ENCODE measurements at regions of chr3 and their contacts with region 1.

Region 1: GRCh38 chr3:189967254-189967865 is 153.3 kb downstream of the P3H2 start:
- DNase-seq: no peak
- H3K4me3 ChIP-seq: no peak overlapping the region
- CTCF ChIP-seq: peak; percentile 57

Region 2: DNA sequence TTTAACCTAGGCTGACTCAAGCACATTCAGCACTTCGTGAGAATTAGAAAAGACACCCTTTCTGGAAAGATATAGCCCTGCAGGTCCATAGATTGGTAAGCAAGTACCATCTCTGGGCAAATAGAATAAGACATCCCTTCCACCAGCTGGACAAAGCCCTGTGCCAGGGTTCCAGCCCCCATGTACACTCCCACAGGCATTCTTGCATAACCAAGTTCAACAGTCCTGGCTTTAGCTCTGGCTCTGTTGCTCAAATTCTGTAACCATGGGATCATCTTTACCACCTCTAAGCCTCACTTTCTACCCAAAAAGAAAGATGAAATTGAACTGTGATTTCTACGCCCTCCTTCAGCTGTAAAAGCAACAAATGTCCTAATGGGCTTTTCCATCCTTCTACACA is 12.6 kb before region 1 on chr3:
- CTCF ChIA-PET with region 1: interaction called, 62 read pairs
- POLR2A ChIA-PET with region 1: no interaction called
- DNase-seq: no peak
- H3K4me3 ChIP-seq: no peak overlapping the region
- CTCF ChIP-seq: no peak

Region 3: GRCh38 chr3:189999718-190000117 is 32.4 kb after region 1 on chr3:
- CTCF ChIA-PET with region 1: interaction called, 15 read pairs
- POLR2A ChIA-PET with region 1: no interaction called
- DNase-seq: no peak
- H3K4me3 ChIP-seq: no peak overlapping the region
- CTCF ChIP-seq: no peak

Region 4: GRCh38 chr3:190017521-190018288 is 50.3 kb after region 1 on chr3:
- CTCF ChIA-PET with region 1: interaction called, 17 read pairs
- POLR2A ChIA-PET with region 1: no interaction called
- DNase-seq: no peak
- H3K4me3 ChIP-seq: no peak overlapping the region
- CTCF ChIP-seq: peak; percentile 26

Region 5: DNA sequence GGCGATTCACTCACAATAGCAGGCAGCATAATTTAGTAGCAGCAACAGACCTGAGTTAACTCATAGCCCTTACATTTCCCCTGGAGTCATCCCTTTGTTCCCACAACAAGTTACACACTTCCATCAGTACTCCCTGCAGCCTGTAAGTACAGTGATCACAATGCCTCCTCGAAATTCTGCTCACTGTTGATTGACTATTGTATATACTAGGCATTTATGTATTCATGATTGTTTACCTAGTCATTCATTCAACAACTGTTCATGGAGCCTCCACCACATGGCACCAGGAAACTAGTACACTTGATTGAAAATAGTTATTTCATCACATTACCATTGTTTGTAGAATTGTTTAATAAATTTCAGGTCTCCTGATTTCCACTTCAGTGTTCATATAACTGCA is 224.7 kb after region 1 on chr3:
- CTCF ChIA-PET with region 1: interaction called, 75 read pairs
- POLR2A ChIA-PET with region 1: no interaction called
- DNase-seq: no peak
- H3K4me3 ChIP-seq: no peak overlapping the region
- CTCF ChIP-seq: no peak

Region 6: DNA sequence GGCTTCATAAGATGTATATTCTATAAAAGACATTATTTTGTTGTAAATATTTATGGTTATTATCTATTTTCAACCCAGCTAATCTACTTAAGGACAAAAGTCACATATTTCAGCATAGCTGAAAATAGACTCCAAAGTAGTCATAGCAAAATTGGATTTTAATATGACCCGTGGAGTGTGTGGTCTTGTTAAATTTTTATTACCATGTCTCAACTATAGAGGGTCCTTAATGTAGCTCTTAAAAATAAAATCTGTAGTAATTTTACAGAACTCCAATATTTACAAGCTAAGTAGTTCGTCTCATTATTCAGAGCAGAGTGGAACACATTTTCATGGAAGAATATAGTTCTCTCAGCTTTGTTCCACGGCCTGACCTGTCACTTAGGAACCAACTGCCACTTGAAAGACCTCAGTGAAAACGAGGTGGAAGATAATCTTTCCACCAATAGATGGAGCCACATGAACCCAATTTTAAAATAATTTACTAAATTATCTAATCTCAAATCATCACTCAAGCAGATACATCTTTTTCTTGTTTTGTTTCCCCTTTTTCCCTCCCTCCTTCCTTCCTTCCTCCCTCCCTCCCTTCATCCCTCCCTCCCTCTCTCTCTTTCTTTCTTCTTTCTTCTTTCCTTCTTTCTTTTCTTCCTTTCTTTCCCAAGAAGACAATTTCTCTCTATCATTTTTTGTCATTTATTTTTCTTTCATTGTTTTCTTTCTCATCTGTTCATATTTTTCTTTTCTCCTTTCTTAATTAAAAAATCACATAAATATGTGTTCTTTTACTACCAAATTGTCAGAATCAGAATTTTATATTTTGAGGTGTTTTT is 257.7 kb after region 1 on chr3:
- CTCF ChIA-PET with region 1: interaction called, 36 read pairs
- POLR2A ChIA-PET with region 1: no interaction called
- DNase-seq: no peak
- H3K4me3 ChIP-seq: no peak overlapping the region
- CTCF ChIP-seq: peak; percentile 12

Measured in AG04449 (cell line).